ENCODE measurements at regions of chr17 and their contacts with region 1.

Region 1: GRCh38 chr17:75845049-75845860 is 1.1 kb upstream of the UNC13D start:
- DNase-seq: peak; percentile 70
- H3K27ac ChIP-seq: peak overlapping the region; percentile 92
- CTCF ChIP-seq: peak; percentile 86

Region 2: DNA sequence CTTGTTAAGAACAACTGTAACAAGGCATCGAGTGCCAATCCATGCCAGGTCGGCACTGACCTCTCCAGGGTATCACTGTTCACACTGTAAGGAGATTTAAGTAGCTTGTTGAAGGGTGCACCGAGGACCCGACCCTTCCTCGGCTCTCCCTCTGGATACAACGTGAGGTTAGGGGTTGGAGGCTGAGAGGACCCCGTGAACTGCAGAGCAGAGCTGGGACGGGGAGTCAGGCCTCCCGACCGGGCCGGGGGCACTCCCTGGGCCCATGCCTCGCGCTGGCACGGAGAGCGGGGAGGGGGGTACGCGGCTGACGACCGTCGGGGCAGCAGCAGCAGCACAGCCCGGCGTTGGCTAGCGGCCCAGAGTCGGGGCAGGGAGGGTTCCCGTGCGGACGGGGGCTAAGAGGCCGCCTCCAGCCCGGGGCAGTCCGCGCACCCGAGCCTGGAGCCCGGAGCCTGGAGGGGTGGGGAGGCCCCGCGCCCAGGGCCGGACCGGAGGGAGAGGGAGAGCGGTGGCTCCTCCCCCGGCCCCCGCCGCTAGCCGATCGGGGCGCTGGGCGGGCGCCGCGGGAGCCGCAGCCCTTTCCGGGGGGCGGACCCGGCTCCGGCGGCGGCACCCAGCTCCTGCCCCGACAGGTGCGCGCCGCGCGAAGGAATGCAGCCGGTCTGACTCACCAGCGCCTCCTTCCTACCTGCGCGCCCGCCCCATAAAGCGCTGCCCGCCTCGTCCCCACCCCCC is 124.4 kb before region 1 on chr17 and contains the start of gene ITGB4:
- CTCF ChIA-PET with region 1: no interaction called
- POLR2A ChIA-PET with region 1: no interaction called
- DNase-seq: peak; percentile 92
- H3K27ac ChIP-seq: peak within 1 kb of the TSS; percentile 98
- CTCF ChIP-seq: no peak

Region 3: GRCh38 chr17:75814900-75815373 is 30.3 kb before region 1 on chr17:
- CTCF ChIA-PET with region 1: interaction called, 3 read pairs
- POLR2A ChIA-PET with region 1: interaction called, 11 read pairs
- DNase-seq: peak; percentile 86
- H3K27ac ChIP-seq: peak overlapping the region; percentile 94
- CTCF ChIP-seq: no peak

Region 4: DNA sequence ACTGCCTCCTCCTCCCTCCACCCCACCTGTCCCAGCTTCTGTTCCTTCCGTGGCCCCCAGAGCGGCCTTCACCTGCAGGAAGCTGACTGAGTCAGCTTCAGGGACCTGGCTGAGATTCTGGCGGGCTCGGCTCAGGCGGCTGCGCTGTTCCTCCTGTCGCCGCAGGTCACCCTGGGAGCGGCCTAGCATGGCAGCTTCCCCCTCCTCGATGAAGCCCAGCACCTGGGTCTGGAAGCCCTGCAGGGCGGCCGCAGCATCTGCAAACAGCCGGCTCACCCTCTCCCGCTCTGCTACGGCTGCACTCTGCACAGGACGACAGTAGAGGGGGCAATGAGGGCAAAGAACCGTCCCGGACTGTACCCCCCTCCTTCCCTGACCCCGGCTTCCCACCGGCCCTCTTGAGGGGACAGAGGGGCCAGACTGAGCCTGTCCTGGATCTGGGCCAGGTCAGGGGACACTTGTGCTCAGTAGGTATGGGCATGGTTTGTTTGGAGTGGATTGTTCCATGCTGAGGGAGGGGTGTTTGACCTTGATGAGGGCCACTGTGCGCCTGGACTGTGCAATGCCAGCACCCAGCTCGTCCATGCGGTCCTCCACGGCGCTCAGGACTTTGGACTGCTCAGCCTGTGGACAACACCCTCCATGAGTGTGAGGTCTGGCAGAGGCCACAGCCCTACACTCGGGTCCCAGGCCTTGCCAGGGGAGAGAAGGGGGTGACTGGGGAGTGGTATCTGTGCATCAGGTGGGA is 31.1 kb after region 1 on chr17:
- CTCF ChIA-PET with region 1: interaction called, 11 read pairs
- POLR2A ChIA-PET with region 1: no interaction called
- DNase-seq: peak; percentile 54
- H3K27ac ChIP-seq: peak overlapping the region; percentile 98
- CTCF ChIP-seq: peak; percentile 36

Measured in RWPE1 (cell line).